Natural killer cell (primary cell): ENCODE measurements at regions of chr1 and their contacts with region 1.

Region 1: DNA sequence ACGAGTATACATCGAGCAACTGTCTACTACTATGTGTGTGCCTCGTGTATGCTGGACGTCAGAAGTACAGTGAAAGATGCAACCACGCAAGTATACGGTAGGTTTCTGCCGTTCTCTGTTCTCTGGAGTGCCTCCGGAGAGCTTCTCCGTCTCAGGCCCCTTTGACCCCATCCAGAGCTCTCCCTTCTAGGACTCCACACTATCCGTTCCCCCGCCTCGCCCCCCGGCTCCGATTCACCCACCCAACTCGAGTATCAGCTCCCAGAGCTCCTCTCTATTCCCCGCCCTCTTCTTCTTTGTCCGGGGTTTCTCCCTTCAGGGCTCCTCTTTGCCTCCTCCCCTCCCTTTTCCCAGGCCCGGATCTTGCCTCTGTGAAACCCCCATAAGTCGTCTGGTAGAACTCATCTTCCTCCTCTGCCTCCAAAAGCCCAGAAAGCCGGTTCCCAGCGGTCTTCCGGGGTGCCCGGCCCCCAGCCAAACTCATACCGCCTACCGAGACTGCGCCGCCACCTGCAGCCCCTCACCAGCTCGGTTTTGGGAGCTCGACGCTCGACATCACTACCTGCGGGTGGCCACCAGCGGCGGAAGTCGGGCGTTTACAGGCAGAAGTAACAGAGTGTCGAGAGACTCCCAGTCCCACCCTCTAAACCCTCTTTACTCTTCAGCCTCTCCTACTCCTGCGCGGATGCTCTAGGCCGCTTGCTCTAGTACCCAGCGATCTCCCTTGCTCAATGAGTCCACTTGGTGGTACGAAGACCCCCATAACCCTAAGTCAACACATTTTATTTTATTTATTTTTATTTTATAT is at the start of gene VPS72:
- DNase-seq: peak; percentile 73 to 93
- ATAC-seq: peak; percentile 95 to 98 (median 96)
- H3K4me3 ChIP-seq: peak within 1 kb of the TSS; percentile 89
- H3K4me3 Mint-ChIP-seq: peak within 1 kb of the TSS; percentile 100
- H3K27ac ChIP-seq: peak within 1 kb of the TSS; percentile 85
- H3K27ac Mint-ChIP-seq: peak within 1 kb of the TSS; percentile 97 to 98
- H3K4me1 ChIP-seq: peaks cover 19% of the 10 kb centered on the region
- H3K4me1 Mint-ChIP-seq: peaks cover 33 to 40% of the 10 kb centered on the region in 2 donors
- H3K27me3 ChIP-seq: no peaks in the 10 kb centered on the region
- H3K27me3 Mint-ChIP-seq: peaks cover 6 to 7% of the 10 kb centered on the region in 2 donors
- CTCF ChIP-seq: no peak
- total RNA-seq, gene VPS72: 26.2 to 45.1 (median 44.8) TPM

Region 2: DNA sequence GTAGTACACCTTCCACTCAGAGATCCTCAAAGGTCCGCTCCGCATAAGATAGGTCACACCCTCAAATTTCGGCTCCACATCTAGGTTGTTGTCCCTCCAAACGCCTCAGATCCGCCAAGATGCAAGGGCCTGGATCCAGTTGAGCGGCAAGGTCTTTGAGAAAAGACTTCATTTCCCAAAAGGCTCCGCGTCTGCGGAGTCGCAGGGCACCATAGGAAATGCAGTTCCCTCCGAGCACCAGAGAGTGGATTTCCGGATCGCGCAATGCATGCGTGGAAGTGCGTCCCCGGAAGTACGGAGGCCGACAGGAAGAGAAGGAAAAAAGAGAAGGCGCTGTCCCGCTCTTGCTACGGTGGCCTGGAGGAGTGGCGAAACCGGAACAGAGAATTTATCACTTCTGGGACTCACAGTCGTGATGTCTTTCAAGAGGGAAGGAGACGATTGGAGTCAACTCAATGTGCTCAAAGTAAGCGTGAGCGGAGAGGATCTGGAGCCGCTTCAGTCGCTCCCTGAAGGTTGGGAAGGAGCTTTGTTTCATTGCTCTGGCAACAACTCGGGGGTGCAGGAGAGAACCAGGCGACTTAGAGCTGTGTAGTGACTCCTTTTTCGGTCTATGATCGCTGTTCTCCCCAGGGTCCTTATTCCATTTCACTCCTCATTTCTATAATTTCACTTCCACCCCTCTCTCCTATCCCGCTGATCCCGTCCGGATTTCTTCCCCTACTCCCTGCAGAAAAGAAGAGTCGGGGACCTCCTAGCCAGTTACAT is 23.9 kb before region 1 on chr1 and contains the starts of genes LYSMD1 and SCNM1:
- intact Hi-C with region 1: loop called (anchors 1 kb)
- DNase-seq: peak; percentile 91 to 99
- ATAC-seq: peak; percentile 97 to 99 (median 98)
- H3K4me3 ChIP-seq: peak within 1 kb of the TSS; percentile 90
- H3K4me3 Mint-ChIP-seq: peak within 1 kb of the TSS; percentile 99
- H3K27ac ChIP-seq: peak within 1 kb of the TSS; percentile 68
- H3K27ac Mint-ChIP-seq: peak within 1 kb of the TSS; percentile 94
- H3K4me1 ChIP-seq: peaks cover 27% of the 10 kb centered on the region
- H3K4me1 Mint-ChIP-seq: peaks cover 30 to 42% of the 10 kb centered on the region in 2 donors
- H3K27me3 ChIP-seq: no peaks in the 10 kb centered on the region
- H3K27me3 Mint-ChIP-seq: no peaks in the 10 kb centered on the region
- CTCF ChIP-seq: no peak
- total RNA-seq, gene LYSMD1: 1.0 to 1.7 (median 1.2) TPM
- total RNA-seq, gene SCNM1: 52.3 to 54.2 (median 52.9) TPM

Region 3: GRCh38 chr1:151762941-151763921 is 573.4 kb after region 1 on chr1 and contains the start of gene MRPL9:
- intact Hi-C with region 1: no loop called
- DNase-seq: peak; percentile 84 to 88
- ATAC-seq: peak; percentile 97 to 99 (median 98)
- H3K4me3 ChIP-seq: peak within 1 kb of the TSS; percentile 76
- H3K4me3 Mint-ChIP-seq: peak within 1 kb of the TSS; percentile 98
- H3K27ac ChIP-seq: peak within 1 kb of the TSS; percentile 91
- H3K27ac Mint-ChIP-seq: peak within 1 kb of the TSS; percentile 96 to 99
- H3K4me1 ChIP-seq: peaks cover 11% of the 10 kb centered on the region
- H3K4me1 Mint-ChIP-seq: peaks cover 22 to 23% of the 10 kb centered on the region in 2 donors
- H3K27me3 ChIP-seq: no peaks in the 10 kb centered on the region
- H3K27me3 Mint-ChIP-seq: no peaks in the 10 kb centered on the region
- CTCF ChIP-seq: no peak
- total RNA-seq, gene MRPL9: 93.6 to 110 (median 107) TPM